ENCODE measurements at regions of chr20 and their contacts with region 1.

Region 1: GRCh38 chr20:53664113-53664850 is 70.6 kb upstream of the ZNF217 start:
- DNase-seq: no peak
- H3K4me3 ChIP-seq: no peak overlapping the region
- H3K27ac ChIP-seq: no peak overlapping the region
- H3K4me1 ChIP-seq: 0 out of 2 replicates have a peak, but pooled peaks cover 3% of the 10 kb centered on the region
- H3K27me3 ChIP-seq: no peaks in the 10 kb centered on the region
- CTCF ChIP-seq: no peak

Region 2: DNA sequence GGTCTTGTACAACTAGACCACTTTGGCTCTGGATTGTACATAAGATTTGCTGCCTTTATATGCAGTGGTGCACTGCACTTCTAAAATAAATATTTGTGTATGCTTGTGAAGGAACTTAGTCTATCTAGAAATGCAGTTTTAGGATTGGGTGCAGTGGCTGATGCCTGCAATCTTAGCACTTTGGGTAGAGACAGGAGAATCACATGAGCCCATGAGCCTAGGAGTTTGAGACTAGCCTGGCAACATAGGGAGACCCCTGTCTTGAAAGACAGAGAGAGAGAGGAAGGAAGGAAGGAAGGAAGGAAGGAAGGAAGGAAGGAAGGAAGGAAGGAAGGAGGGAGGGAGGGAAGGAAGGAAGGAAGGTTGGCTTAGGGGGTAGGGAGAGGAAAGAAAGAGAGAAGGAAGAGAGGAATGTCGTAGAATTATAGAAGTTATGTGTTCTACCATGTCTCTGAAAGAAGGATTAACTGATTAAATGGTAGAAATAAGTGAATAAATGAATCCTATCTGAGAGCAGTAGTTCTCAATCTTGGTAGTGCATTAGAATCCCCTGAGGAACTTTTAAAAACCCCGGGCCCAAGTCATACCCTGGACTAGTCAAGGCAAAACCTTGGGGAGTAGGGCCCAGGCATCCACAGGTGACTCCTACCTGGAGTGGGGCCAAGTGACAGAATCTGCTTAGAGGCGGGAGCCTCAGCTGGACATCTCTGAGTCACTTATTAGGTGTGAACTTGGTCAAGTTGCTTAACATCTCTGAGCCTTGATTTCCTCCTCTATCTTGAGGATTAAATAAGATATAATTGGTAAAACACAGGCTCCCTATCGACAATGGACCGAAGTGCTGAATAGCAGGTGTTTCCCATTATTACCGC is 200.9 kb before region 1 on chr20:
- CTCF ChIA-PET with region 1: no interaction called
- POLR2A ChIA-PET with region 1: no interaction called
- intact Hi-C with region 1: no loop called
- DNase-seq: no peak
- H3K4me3 ChIP-seq: no peak overlapping the region
- H3K27ac ChIP-seq: no peak overlapping the region
- H3K4me1 ChIP-seq: no peaks in the 10 kb centered on the region
- H3K27me3 ChIP-seq: peaks cover 61% of the 10 kb centered on the region
- CTCF ChIP-seq: no peak

Region 3: GRCh38 chr20:53677447-53678314 is 13.4 kb after region 1 on chr20:
- CTCF ChIA-PET with region 1: no interaction called
- POLR2A ChIA-PET with region 1: no interaction called
- intact Hi-C with region 1: no loop called
- DNase-seq: no peak
- H3K4me3 ChIP-seq: no peak overlapping the region
- H3K27ac ChIP-seq: 0 out of 2 replicates have a peak overlapping the region, but pooled peaks have one; percentile 22
- H3K4me1 ChIP-seq: peaks cover 39% of the 10 kb centered on the region
- H3K27me3 ChIP-seq: no peaks in the 10 kb centered on the region
- CTCF ChIP-seq: no peak

Region 4: DNA sequence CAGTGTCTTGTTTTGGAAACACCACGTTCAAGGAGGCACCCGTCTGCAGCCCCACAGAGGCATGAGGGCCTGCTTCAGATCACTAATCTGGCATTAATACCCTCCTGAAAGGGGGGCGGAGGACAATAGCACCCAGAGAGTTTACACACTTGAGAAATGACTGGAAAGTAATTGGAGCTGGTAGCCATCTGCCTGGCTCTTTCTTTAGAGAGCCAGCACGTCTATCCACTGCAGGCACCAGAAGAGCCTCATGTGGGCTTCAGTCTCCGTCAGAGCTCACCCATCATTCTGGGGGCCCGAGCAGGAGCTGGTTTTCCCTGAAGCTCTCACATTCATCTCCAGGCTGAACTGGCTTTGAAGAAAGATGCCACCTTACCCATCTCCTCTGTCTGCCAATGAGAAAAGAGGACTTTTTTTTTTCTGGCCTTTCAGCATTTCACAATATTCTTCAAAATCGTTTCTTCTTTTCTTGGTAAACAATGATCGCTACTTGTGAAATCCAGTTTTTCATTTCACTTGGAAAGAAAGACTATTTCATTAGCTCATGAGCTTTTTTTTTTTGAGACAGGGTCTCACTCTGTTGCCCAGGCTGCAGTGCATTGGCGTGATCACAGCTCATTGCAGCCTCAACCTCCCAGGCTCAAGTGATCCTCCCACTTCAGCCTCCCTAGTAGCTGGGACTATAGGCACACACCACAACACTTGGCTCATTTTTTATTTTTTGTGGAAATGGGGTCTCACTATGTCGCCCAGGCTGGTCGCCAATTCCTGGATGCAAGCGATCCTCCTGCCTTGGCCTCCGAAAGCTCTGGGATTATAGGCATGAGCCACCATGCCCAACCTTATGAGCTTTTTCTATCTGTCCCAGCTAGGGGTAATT is 54.1 kb after region 1 on chr20:
- CTCF ChIA-PET with region 1: no interaction called
- POLR2A ChIA-PET with region 1: no interaction called
- intact Hi-C with region 1: no loop called
- DNase-seq: no peak
- H3K4me3 ChIP-seq: no peak overlapping the region
- H3K27ac ChIP-seq: no peak overlapping the region
- H3K4me1 ChIP-seq: no peaks in the 10 kb centered on the region
- H3K27me3 ChIP-seq: no peaks in the 10 kb centered on the region
- CTCF ChIP-seq: no peak

Region 5: DNA sequence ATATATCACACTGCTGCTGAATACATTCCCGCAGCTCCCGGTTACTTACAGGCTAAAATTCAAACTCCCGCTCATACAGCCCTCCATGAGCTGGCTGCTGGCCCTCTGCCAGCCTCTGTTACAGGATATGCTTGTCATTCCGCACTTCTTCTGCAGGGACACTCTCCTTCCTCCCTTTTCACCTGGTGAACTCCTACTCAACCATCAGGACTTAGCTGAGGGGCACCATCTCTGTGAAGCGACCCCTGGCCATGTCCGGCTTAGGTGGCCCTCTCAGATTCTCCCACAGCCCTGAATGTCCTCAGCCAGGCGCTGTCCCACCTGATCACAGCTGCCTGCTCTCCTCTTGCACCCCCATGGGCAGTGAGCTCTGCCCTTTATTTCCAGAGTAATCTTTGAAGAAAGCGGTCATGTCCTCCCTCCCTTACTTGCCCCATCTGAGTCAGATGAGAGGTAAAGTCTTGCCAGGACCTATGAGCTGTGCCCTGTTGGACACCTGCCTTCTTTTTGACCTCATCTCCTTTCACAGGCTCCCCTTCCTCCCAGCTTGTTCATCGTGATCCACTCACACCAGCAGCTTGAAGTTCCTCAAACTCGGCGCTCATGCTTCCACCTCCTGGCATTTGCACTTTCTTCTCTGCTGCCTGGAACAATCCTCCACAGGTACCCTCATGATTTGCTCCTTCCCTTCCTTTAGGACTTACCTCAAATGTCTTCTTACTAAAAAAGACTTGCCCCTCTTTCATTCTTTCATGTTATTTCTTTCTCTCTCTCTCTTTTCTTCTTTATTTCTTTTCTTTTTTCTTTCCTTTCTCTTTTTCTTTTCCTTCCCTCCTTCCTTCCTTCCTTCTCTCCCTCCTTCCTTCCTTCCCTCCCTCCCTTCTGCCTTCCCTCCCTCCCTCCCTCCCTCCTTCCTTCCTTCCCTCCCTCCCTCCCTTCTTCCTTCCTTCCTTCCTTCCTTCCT is 503.9 kb after region 1 on chr20:
- CTCF ChIA-PET with region 1: no interaction called
- POLR2A ChIA-PET with region 1: interaction called, 26 read pairs
- intact Hi-C with region 1: no loop called
- DNase-seq: peak; percentile 80 to 96
- H3K4me3 ChIP-seq: peak overlapping the region; percentile 63
- H3K27ac ChIP-seq: peak overlapping the region; percentile 96
- H3K4me1 ChIP-seq: peaks cover 46% of the 10 kb centered on the region
- H3K27me3 ChIP-seq: no peaks in the 10 kb centered on the region
- CTCF ChIP-seq: no peak

Measured in PC-9 (cell line).